A549 (cell line): ENCODE measurements at regions of chr15 and their contacts with region 1.

Region 1: DNA sequence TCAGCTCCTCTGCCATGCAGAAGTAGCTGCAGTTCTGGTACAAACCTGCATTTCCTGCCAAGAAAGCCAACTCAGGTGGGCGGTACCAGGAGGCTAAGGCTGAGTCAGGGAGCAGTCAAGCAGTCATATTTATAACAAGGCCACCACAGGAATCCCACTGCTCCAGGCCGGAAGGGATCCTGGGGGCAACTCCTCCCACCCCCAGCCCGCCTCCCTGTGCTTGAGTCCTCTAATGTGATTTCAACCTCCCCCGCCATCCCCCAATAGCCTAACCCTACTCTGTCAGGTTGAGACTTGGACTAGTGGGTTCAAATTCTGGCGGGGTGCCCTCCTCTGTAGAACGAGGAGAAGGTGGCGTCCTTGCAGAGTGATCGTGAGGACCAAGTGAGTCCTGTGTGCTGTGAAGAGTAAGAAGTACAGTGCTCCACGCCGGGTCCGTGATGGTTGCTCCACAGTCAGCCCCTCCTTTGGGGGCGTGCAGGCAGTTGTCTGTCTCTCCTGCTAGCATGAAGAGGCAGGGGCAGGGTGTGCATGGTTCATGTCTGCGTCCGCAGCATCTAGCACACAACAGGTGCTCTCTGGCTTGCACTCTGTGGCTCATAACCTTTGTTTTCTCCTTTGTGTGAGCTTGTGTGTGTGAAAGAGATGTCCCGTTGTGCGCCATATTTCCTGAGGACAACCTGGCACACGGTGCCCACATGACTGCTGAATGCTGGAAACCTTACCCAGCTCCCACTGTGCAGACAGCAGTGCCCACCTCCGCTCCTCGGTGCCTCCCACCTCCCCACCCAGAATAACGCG is 78.3 kb downstream of the SMAD6 start:
- DNase-seq: peak; percentile 44 to 61
- ATAC-seq: peak; percentile 35 to 57; a peak in 4 of 6 replicates
- H3K4me3 ChIP-seq: no peak overlapping the region
- H3K27ac ChIP-seq: peak overlapping the region; percentile 60 to 94
- H3K4me1 ChIP-seq: peaks cover 55% of the 10 kb centered on the region
- CTCF ChIP-seq: no peak
- EP300 ChIP-seq: no peak
- POLR2A ChIP-seq: no peak
- RAD21 ChIP-seq: no peak

Region 2: DNA sequence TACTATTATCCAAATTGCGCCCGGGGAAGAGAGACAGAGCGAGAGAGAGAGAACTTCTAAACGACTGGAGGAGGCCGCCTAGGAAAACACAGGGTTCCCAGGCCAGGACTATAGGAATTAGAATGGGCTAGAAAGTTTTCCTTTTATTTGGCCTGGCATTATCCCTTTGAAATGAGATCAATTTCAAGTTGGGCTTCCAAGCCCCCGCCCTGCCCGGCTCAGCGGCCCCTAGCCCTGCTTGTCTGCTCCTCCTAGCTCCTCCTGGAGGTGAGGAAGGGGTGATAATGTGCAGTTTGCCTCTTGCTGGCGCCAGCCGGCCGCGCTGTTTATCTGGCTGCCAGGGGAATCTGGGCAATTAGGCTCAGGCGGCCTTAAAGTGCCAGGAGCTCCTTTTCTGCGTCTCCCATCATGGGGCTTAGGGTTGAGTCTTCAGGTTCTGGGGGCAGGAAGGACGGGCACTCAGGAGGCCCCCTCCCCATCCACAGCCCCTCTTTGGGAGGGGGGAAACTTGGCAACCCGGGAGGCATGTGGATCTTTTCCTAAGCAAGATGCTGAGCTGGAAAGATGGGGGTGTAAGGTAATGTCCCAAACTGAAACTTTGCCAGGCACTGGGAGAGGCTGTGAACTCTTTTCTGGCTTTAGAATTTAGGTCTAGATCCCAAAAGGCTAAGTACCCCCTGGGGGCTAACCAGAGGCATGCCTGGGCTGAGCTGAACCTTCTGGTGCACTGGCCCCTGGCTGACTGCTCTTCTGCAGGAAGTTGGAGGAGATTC is 72.9 kb before region 1 on chr15:
- CTCF ChIA-PET with region 1: interaction called, 779 read pairs
- POLR2A ChIA-PET with region 1: interaction called, 94 read pairs
- DNase-seq: peak; percentile 63 to 73
- ATAC-seq: peak; percentile 31 to 70; a peak in 4 of 6 replicates
- H3K4me3 ChIP-seq: peak overlapping the region; percentile 90; the same call in 2 of the 3 replicates
- H3K27ac ChIP-seq: peak overlapping the region; percentile 47 to 95
- H3K4me1 ChIP-seq: peaks cover 76% of the 10 kb centered on the region
- CTCF ChIP-seq: peak; percentile 41
- EP300 ChIP-seq: no peak
- POLR2A ChIP-seq: no peak
- RAD21 ChIP-seq: peak; percentile 53 to 68

Region 3: GRCh38 chr15:66803182-66803729 is 22.9 kb after region 1 on chr15:
- CTCF ChIA-PET with region 1: interaction called, 18 read pairs
- POLR2A ChIA-PET with region 1: no interaction called
- DNase-seq: peak; percentile 95 to 98
- ATAC-seq: peak; percentile 97 to 99
- H3K4me3 ChIP-seq: no peak overlapping the region
- H3K27ac ChIP-seq: peak overlapping the region; percentile 83 to 93
- H3K4me1 ChIP-seq: peaks cover 58% of the 10 kb centered on the region
- CTCF ChIP-seq: no peak
- EP300 ChIP-seq: peak; percentile 13 to 65; a peak in 2 of 5 replicates
- POLR2A ChIP-seq: peak; percentile 21; the same call in 1 of the 2 replicates
- RAD21 ChIP-seq: peak in 1 of 2 experiments; percentile 33; a peak in 2 of 5 replicates

Region 4: DNA sequence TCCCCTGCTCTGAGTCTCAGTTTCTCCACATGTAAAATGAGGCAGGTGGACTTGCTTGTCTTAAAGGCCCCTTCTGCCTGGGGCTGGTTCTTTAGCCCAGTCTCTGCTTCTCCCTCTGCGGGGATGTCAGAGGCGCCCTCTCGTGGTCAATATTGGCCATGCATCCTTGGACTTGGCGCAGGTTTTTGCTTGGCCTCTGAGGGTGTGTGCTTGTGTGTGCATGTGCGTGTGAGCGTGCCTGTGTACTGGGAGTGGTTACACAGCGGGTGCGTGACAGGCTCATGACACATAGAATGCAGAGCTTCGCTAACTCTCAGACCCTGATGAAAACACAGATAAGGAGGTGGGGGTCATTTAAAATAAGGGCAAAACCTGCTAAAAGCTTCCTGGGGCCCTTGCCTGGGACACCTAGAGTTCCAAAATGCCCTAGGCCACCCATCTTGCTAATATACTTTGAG is 82.5 kb after region 1 on chr15:
- CTCF ChIA-PET with region 1: interaction called, 17 read pairs
- POLR2A ChIA-PET with region 1: no interaction called
- DNase-seq: peak; percentile 87 to 90
- ATAC-seq: peak; percentile 85 to 97
- H3K4me3 ChIP-seq: no peak overlapping the region
- H3K27ac ChIP-seq: peak overlapping the region; percentile 1 to 66; a peak in 4 of 6 replicates
- H3K4me1 ChIP-seq: peaks cover 17% of the 10 kb centered on the region
- CTCF ChIP-seq: peak; percentile 98
- EP300 ChIP-seq: no peak
- POLR2A ChIP-seq: no peak
- RAD21 ChIP-seq: peak; percentile 83 to 87